Heart right ventricle (tissue), 16 donors: ENCODE measurements at regions of chr4 and their contacts with region 1.

Region 1: GRCh38 chr4:10803713-10804343 is 119.3 kb upstream of the CLNK start:
- DNase-seq: no peak
- ATAC-seq: no peak
- H3K4me3 ChIP-seq: no peak overlapping the region
- H3K27ac ChIP-seq: no peak overlapping the region
- H3K4me1 ChIP-seq: no peaks in the 10 kb centered on the region
- H3K27me3 ChIP-seq: no peaks in the 10 kb centered on the region
- CTCF ChIP-seq: no peak

Region 2: GRCh38 chr4:10773010-10773409 is 30.8 kb before region 1 on chr4:
- intact Hi-C with region 1: loop called in 1 of 10 experiments (anchors 1 kb)
- DNase-seq: peak in 1 of 2 donors; percentile 20
- ATAC-seq: peak in 3 of 8 donors; percentile 33 to 75 (median 56)
- H3K4me3 ChIP-seq: no peak overlapping the region
- H3K27ac ChIP-seq: peak overlapping the region in 4 of 10 donors; percentile 9 to 46 (median 25)
- H3K4me1 ChIP-seq: no peaks in the 10 kb centered on the region
- H3K27me3 ChIP-seq: no peaks in the 10 kb centered on the region
- CTCF ChIP-seq: no peak

Region 3: GRCh38 chr4:11312389-11312788 is 508.6 kb after region 1 on chr4:
- intact Hi-C with region 1: no loop called
- DNase-seq: peak in 1 of 2 donors; percentile 6
- ATAC-seq: peak in 7 of 8 donors; percentile 42 to 97 (median 91)
- H3K4me3 ChIP-seq: no peak overlapping the region
- H3K27ac ChIP-seq: no peak overlapping the region
- H3K4me1 ChIP-seq: peaks cover 0 to 4% (median 0%) of the 10 kb centered on the region in 9 donors
- H3K27me3 ChIP-seq: peaks cover 0 to 4% (median 0%) of the 10 kb centered on the region in 7 donors
- CTCF ChIP-seq: no peak